Dendritic cell treated with granulocyte-macrophage colony-stimulating factor and Interleukin-4, amounts not matched to agents 40 ng/mL and 50 ng/mL, for 4 days (primary cell): ENCODE measurements at regions of chr11 and their contacts with region 1.

Region 1: DNA sequence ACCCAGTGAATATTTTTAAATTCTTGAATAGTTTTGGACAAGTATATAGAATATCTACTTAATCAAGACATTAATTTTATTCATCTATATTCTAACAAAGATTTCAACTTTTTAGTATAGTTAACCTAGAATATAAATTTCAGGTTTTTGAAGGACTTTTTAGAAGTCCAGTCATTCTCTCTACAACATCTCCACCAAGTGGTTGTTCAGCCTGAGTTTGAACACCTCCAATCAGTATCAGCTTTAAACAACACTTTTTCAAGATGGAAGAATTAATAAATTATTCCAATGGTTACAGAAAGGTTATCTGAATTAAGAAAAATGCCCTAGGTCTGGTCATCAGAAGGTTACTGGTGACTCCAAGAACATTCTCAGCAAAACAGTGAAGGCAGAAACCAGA is 31.8 kb downstream of the EIF3M start:
- H3K4me3 Mint-ChIP-seq: no peak overlapping the region
- H3K27ac Mint-ChIP-seq: no peak overlapping the region
- H3K4me1 Mint-ChIP-seq: peaks cover 5% of the 10 kb centered on the region
- H3K27me3 Mint-ChIP-seq: no peaks in the 10 kb centered on the region

Region 2: GRCh38 chr11:32326522-32326921 is 288.9 kb before region 1 on chr11:
- intact Hi-C with region 1: loop called (anchors 10 kb)
- H3K4me3 Mint-ChIP-seq: no peak overlapping the region
- H3K27ac Mint-ChIP-seq: no peak overlapping the region
- H3K4me1 Mint-ChIP-seq: peaks cover 5% of the 10 kb centered on the region
- H3K27me3 Mint-ChIP-seq: peaks cover 9% of the 10 kb centered on the region

Region 3: GRCh38 chr11:32658639-32659406 is 43.4 kb after region 1 on chr11:
- intact Hi-C with region 1: no loop called
- H3K4me3 Mint-ChIP-seq: no peak overlapping the region
- H3K27ac Mint-ChIP-seq: no peak overlapping the region
- H3K4me1 Mint-ChIP-seq: no peaks in the 10 kb centered on the region
- H3K27me3 Mint-ChIP-seq: peaks cover 2% of the 10 kb centered on the region